Uterus (tissue), 4 donors: ENCODE measurements at regions of chr2 and their contacts with region 1.

Region 1: DNA sequence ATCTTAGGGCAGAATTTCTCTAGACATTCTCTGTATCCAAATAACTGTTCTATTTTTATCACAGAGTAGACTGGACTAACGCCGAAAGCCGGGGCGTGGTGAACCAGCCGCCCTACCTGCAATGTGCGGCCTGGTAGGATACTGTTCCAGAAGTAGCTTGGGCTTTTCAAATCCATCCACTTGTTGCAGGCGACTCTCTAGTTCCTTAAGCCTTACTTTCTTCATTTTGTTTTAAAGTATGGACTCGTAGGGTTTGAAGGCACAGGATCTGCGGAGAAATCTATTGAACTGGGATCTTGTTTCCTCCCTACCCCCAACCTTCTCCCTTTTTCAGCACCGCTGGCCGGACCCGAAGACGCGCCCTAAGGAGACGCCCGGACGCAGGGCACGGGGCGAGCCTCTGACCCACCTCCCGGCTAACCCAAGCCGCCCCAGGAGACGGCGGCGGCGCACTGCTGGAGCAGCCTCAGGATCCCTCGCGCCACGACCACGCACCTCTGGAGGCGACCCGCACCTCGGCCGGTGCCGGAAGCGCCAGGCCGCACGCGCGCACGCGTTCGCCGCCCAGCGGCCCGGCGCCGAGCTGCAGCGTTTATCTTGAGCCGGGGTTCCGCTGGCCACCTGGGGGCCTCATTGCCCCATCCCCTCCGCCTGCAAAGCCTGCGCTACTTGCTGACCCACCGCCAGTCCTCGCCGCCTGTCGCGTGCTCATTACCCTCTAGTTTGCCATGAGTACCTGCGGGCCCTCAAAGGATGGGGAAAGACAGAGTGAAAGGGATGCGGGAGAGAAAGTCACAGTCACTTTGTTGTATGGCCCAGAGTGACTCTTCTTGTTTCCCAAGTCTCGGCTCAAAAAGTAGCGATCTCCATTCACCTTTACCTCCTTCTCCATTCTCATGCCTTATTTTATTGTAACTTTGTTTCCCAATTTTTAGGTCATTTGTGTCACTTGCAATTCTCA is at the start of gene METTL5:
- DNase-seq: peak; percentile 76 to 83
- H3K4me3 ChIP-seq: peak within 1 kb of the TSS; percentile 77 to 82
- H3K27ac ChIP-seq: peak within 1 kb of the TSS; percentile 81 to 84
- H3K4me1 ChIP-seq: peaks cover 0 to 7% of the 10 kb centered on the region in 2 donors
- H3K27me3 ChIP-seq: no peaks in the 10 kb centered on the region
- CTCF ChIP-seq: peak; percentile 82 to 99 (median 98)
- POLR2A ChIP-seq: peak in 1 of 2 donors; percentile 71
- total RNA-seq, gene METTL5: 28.5 to 763 (median 38.4) TPM

Region 2: DNA sequence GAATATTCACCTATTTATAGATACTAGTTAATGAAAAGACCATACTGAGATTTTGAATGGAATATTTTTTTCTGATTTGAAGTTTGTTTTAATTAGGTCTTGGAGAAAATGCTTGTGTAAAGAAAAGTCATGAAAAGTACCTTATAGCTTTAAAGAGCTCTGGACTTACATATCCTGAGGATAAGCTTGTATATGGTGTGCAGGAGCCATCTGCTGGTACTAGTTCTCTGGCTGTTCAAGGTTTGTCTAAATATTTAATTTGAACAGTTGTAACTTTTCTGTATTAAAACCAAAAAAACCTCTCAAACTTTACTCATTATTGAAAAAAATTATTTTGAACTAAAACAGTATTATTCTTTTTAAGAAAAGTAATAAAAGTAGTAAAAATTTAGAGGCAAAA is 52.7 kb after region 1 on chr2:
- intact Hi-C with region 1: loop called (anchors 10 kb)
- DNase-seq: no peak
- H3K4me3 ChIP-seq: no peak overlapping the region
- H3K27ac ChIP-seq: no peak overlapping the region
- H3K4me1 ChIP-seq: peaks cover 0 to 3% of the 10 kb centered on the region in 2 donors
- H3K27me3 ChIP-seq: no peaks in the 10 kb centered on the region
- CTCF ChIP-seq: peak in 1 of 4 experiments; percentile 7
- POLR2A ChIP-seq: no peak

Region 3: GRCh38 chr2:169928463-169928864 is 103.8 kb after region 1 on chr2:
- intact Hi-C with region 1: loop called (anchors 5 kb)
- DNase-seq: no peak
- H3K4me3 ChIP-seq: no peak overlapping the region
- H3K27ac ChIP-seq: no peak overlapping the region
- H3K4me1 ChIP-seq: no peaks in the 10 kb centered on the region
- H3K27me3 ChIP-seq: no peaks in the 10 kb centered on the region
- CTCF ChIP-seq: peak; percentile 54 to 60 (median 56)
- POLR2A ChIP-seq: no peak

Region 4: DNA sequence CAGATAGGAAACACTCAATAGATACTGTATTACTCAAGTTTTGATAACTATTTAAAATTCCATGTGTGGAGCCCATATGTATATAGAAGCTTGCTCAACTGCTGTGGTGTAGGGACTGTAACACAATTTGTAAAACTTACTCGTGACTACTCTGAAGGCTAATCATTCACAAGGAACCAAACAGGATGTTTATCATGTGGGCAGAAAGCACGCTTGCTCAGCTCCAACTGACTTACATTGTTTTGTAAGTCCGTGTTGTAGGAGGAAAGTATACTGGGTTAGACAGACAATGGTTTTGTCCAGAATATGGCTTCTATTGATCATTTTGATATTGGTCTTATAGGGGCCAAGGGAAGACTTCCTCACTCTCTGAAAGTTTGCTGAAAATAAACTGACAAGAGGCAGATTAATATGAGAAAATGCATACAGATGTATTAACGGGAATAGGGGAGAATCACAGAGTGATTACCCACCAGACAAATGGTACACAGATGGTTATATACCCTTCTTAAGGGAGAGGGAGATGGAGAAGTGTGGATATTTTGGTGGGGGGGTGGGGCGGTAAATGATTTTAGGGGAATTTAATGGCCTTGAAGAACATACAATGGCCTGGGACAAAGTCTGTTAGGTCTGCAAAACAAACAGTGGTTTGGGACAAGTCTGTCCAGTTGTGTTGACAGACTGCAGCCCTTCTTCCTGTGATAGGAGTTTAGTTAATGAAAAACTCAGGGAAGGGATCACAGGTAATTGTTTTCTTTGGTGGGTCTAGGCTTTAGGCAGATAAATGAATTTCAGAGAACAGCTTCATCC is 631.2 kb after region 1 on chr2:
- intact Hi-C with region 1: no loop called
- DNase-seq: no peak
- H3K4me3 ChIP-seq: no peak overlapping the region
- H3K27ac ChIP-seq: no peak overlapping the region
- H3K4me1 ChIP-seq: no peaks in the 10 kb centered on the region
- H3K27me3 ChIP-seq: no peaks in the 10 kb centered on the region
- CTCF ChIP-seq: no peak
- POLR2A ChIP-seq: no peak